ENCODE measurements at regions of chr19 and their contacts with region 1.

Region 1: GRCh38 chr19:32798201-32798600 is 71.4 kb downstream of the SLC7A9 start:
- DNase-seq: no peak
- H3K4me3 ChIP-seq: no peak overlapping the region
- H3K4me3 Mint-ChIP-seq: no peak overlapping the region
- H3K27ac ChIP-seq: no peak overlapping the region
- H3K27ac Mint-ChIP-seq: peak overlapping the region in 1 of 7 donors; percentile 29
- H3K4me1 ChIP-seq: peaks cover 30% of the 10 kb centered on the region
- H3K4me1 Mint-ChIP-seq: peaks cover 36 to 55% (median 40%) of the 10 kb centered on the region in 4 donors
- H3K27me3 ChIP-seq: no peaks in the 10 kb centered on the region
- H3K27me3 Mint-ChIP-seq: no peaks in the 10 kb centered on the region

Region 2: DNA sequence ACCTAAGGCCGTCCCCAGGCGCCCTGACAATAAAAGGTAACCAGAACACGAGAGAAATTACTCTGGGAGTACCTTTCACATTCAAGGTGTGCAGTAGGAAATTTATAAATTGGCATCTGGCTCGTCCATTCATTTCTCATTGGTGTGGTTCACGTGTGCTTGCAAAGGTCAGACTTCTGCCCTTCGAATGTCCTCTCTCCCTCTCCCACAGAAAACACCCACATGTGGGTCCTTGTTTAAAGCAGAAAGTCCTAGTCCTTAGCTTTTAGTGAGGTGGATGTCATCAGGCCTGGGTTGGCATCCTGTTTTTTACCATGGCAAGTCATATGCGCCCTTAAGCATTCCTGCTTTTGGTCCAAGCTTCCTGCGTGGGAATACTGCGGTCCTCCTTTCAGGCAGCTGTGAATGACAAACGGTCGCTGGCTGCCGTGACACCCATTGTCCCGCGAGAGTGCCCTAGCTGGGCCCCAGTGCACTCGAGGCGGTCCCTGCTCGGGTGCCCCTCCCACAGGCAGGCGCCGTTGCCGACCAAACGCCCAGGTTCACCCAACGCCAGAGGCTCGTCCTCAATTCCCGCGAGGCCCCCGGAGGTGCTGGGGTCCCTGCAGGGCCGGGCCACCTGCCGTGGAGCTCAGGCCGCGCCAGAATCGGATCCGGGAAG is 106.8 kb before region 1 on chr19 and contains the start of gene NUDT19:
- CTCF ChIA-PET with region 1: no interaction called
- POLR2A ChIA-PET with region 1: interaction called, 3 read pairs
- intact Hi-C with region 1: loop called (anchors 1 kb)
- DNase-seq: peak; percentile 68 to 79 (median 71)
- H3K4me3 ChIP-seq: peak within 1 kb of the TSS; percentile 85 to 89
- H3K4me3 Mint-ChIP-seq: peak within 1 kb of the TSS; percentile 91 to 94 (median 92)
- H3K27ac ChIP-seq: peak within 1 kb of the TSS; percentile 63
- H3K27ac Mint-ChIP-seq: peak within 1 kb of the TSS; percentile 80 to 96 (median 94)
- H3K4me1 ChIP-seq: peaks cover 45% of the 10 kb centered on the region
- H3K4me1 Mint-ChIP-seq: peaks cover 42 to 50% (median 45%) of the 10 kb centered on the region in 4 donors
- H3K27me3 ChIP-seq: no peaks in the 10 kb centered on the region
- H3K27me3 Mint-ChIP-seq: no peaks in the 10 kb centered on the region
- total RNA-seq, gene NUDT19: 10.5 to 10.6 TPM

Region 3: GRCh38 chr19:32748497-32748896 is 49.7 kb before region 1 on chr19:
- CTCF ChIA-PET with region 1: no interaction called
- POLR2A ChIA-PET with region 1: no interaction called
- intact Hi-C with region 1: loop called (anchors 5 kb)
- DNase-seq: peak in 3 of 5 donors; percentile 4 to 24 (median 6)
- H3K4me3 ChIP-seq: no peak overlapping the region
- H3K4me3 Mint-ChIP-seq: no peak overlapping the region
- H3K27ac ChIP-seq: no peak overlapping the region
- H3K27ac Mint-ChIP-seq: peak overlapping the region in 1 of 7 donors; percentile 68
- H3K4me1 ChIP-seq: peaks cover 21% of the 10 kb centered on the region
- H3K4me1 Mint-ChIP-seq: peaks cover 0 to 12% (median 9%) of the 10 kb centered on the region in 4 donors
- H3K27me3 ChIP-seq: no peaks in the 10 kb centered on the region
- H3K27me3 Mint-ChIP-seq: peaks cover 3 to 8% of the 10 kb centered on the region in 2 donors

Region 4: DNA sequence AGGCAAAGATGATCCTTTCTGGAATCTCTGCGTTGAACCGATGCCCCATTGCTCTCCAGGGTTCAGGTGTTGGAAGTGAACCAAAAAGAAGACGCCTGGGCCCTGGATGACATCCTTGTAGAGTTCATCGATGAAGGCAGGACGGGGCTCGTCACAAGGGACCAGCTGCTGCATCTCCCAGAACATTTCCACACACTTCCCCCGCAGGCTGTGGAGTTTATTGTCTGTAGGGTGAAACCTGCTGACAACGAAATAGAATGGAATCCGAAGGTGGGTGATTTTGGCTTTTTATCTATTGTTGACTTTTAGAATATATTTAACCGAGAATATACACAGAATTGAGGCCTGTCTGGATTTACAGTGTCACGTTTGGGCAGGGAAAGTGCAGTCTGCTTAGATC is 12.9 kb after region 1 on chr19:
- CTCF ChIA-PET with region 1: no interaction called
- POLR2A ChIA-PET with region 1: no interaction called
- intact Hi-C with region 1: no loop called
- DNase-seq: no peak
- H3K4me3 ChIP-seq: no peak overlapping the region
- H3K4me3 Mint-ChIP-seq: no peak overlapping the region
- H3K27ac ChIP-seq: no peak overlapping the region
- H3K27ac Mint-ChIP-seq: no peak overlapping the region
- H3K4me1 ChIP-seq: peaks cover 14% of the 10 kb centered on the region
- H3K4me1 Mint-ChIP-seq: peaks cover 14 to 24% (median 18%) of the 10 kb centered on the region in 4 donors
- H3K27me3 ChIP-seq: no peaks in the 10 kb centered on the region
- H3K27me3 Mint-ChIP-seq: no peaks in the 10 kb centered on the region